Endothelial cell of umbilical vein (primary cell): ENCODE measurements at regions of chr6 and their contacts with region 1.

Region 1: GRCh38 chr6:11043961-11044711 is at the start of gene ELOVL2:
- DNase-seq: peak; percentile 14
- H3K4me3 ChIP-seq: peak within 1 kb of the TSS in 2 of 3 experiments; percentile 26 to 28
- H3K27ac ChIP-seq: no peak within 1 kb of the TSS
- H3K4me1 ChIP-seq: peaks cover 3% of the 10 kb centered on the region
- H3K27me3 ChIP-seq: peaks cover 34 to 75% of the 10 kb centered on the region in 2 experiments
- CTCF ChIP-seq: peak; percentile 51 to 60
- POLR2A ChIP-seq: no peak
- total RNA-seq, gene ELOVL2: not detected in 2 replicates

Region 2: GRCh38 chr6:10847684-10848083 is 196.5 kb before region 1 on chr6:
- CTCF ChIA-PET with region 1: no interaction called
- POLR2A ChIA-PET with region 1: no interaction called
- dilution Hi-C with region 1: no loop called
- intact Hi-C with region 1: loop called (anchors 10 kb)
- DNase-seq: no peak
- H3K4me3 ChIP-seq: no peak overlapping the region
- H3K27ac ChIP-seq: no peak overlapping the region
- H3K4me1 ChIP-seq: no peaks in the 10 kb centered on the region
- H3K27me3 ChIP-seq: peaks cover 0 to 2% of the 10 kb centered on the region in 2 experiments
- CTCF ChIP-seq: no peak
- POLR2A ChIP-seq: no peak